ENCODE measurements at regions of chr14 and their contacts with region 1.

Region 1: GRCh38 chr14:52455291-52456088 is 96.8 kb downstream of the TXNDC16 start:
- DNase-seq: no peak
- H3K4me3 Mint-ChIP-seq: no peak overlapping the region
- H3K27ac Mint-ChIP-seq: no peak overlapping the region
- H3K4me1 Mint-ChIP-seq: peaks cover 19% of the 10 kb centered on the region
- H3K27me3 Mint-ChIP-seq: no peaks in the 10 kb centered on the region

Region 2: DNA sequence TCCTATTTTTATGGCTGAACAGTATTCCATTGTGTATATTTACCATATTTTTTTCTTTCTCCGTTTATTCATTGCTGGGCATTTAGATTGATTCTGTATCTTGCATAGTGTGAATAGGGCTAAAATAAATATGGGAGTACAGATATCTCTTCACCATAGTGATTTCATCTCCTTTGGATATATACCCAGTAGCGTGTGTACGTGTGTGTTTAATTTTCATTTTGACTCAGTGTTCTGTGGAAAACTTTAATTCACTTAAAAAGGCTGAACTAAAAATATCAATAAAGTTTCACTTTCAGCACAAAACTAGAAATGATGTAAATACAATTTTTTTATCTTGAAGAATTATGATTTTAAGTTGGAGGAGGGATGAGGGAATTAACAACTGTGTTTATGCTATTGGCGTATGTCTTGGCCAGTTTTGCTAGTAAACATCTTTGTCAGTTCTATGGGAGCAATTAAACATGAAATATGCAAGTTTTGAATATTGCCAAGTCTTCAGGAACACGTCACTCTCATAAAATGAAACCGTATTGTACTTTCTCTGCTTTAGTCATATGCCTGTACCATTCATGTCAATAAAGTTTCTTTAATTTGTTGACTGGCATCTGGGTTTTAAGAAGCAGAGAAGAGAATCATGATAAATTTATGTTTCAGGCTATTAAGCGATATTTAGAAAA is 41.6 kb before region 1 on chr14:
- intact Hi-C with region 1: loop called (anchors 1 kb)
- DNase-seq: no peak
- H3K4me3 Mint-ChIP-seq: peak overlapping the region; percentile 67
- H3K27ac Mint-ChIP-seq: peak overlapping the region; percentile 97
- H3K4me1 Mint-ChIP-seq: peaks cover 66% of the 10 kb centered on the region
- H3K27me3 Mint-ChIP-seq: no peaks in the 10 kb centered on the region

Region 3: GRCh38 chr14:52467515-52468266 is 12.2 kb after region 1 on chr14:
- intact Hi-C with region 1: loop called (anchors 1 kb)
- DNase-seq: no peak
- H3K4me3 Mint-ChIP-seq: no peak overlapping the region
- H3K27ac Mint-ChIP-seq: peak overlapping the region; percentile 61
- H3K4me1 Mint-ChIP-seq: peaks cover 33% of the 10 kb centered on the region
- H3K27me3 Mint-ChIP-seq: no peaks in the 10 kb centered on the region